ENCODE measurements at regions of chr18 and their contacts with region 1.

Region 1: GRCh38 chr18:59340817-59341216 is 18.2 kb downstream of the LMAN1 start:
- DNase-seq: no peak
- H3K4me3 Mint-ChIP-seq: no peak overlapping the region
- H3K27ac Mint-ChIP-seq: peak overlapping the region; percentile 25
- H3K4me1 Mint-ChIP-seq: peaks cover 48% of the 10 kb centered on the region
- H3K27me3 Mint-ChIP-seq: no peaks in the 10 kb centered on the region

Region 2: DNA sequence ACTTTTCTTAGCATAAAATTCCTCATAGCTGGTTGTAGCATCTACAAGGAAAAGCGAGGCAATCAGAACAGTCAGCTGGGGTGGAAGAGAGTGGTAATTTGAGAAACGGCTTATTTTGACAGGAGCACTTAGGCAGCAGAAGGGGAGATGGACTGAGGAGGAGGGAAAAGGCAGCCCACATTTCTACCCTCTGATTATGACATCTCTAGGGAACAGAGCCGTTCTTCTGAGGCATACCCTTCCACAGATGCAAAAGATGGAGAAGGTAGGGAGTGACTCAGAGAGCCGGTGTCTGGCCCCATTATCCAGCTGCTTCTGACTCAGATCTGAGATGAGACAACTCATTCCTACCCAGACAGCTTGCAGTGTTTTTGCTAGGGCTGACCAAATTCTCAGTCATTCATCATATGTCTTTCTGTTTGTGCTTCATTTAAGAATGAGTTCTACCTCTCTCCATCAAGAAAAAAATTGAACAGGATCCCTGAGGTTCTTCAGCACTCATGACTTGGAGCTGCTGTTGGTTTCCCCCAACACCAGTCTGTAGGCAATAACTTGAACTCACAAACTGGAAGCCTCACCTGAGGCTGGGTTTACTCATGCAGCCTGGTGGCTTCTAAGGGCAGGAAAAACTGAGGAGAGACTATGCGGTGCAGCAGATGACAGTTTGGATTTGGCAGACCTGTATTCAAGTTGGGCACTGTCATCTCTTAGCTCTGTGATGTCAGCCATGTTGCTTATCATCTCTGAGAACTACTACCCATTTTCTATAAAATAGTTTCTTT is 217.0 kb before region 1 on chr18:
- CTCF ChIA-PET with region 1: no interaction called
- intact Hi-C with region 1: no loop called
- DNase-seq: peak; percentile 51
- H3K4me3 Mint-ChIP-seq: no peak overlapping the region
- H3K27ac Mint-ChIP-seq: peak overlapping the region; percentile 52
- H3K4me1 Mint-ChIP-seq: peaks cover 2% of the 10 kb centered on the region
- H3K27me3 Mint-ChIP-seq: peaks cover 10% of the 10 kb centered on the region

Region 3: GRCh38 chr18:59352250-59352855 is 11.5 kb after region 1 on chr18:
- CTCF ChIA-PET with region 1: interaction called, 7 read pairs
- intact Hi-C with region 1: loop called (anchors 1 kb)
- DNase-seq: no peak
- H3K4me3 Mint-ChIP-seq: no peak overlapping the region
- H3K27ac Mint-ChIP-seq: peak overlapping the region; percentile 9
- H3K4me1 Mint-ChIP-seq: peaks cover 44% of the 10 kb centered on the region
- H3K27me3 Mint-ChIP-seq: no peaks in the 10 kb centered on the region

Region 4: GRCh38 chr18:59396111-59396585 is 55.3 kb after region 1 on chr18:
- CTCF ChIA-PET with region 1: no interaction called
- intact Hi-C with region 1: no loop called
- DNase-seq: no peak
- H3K4me3 Mint-ChIP-seq: no peak overlapping the region
- H3K27ac Mint-ChIP-seq: no peak overlapping the region
- H3K4me1 Mint-ChIP-seq: peaks cover 5% of the 10 kb centered on the region
- H3K27me3 Mint-ChIP-seq: peaks cover 15% of the 10 kb centered on the region

Region 5: GRCh38 chr18:59419386-59419785 is 78.6 kb after region 1 on chr18:
- CTCF ChIA-PET with region 1: no interaction called
- intact Hi-C with region 1: no loop called
- DNase-seq: no peak
- H3K4me3 Mint-ChIP-seq: no peak overlapping the region
- H3K27ac Mint-ChIP-seq: no peak overlapping the region
- H3K4me1 Mint-ChIP-seq: no peaks in the 10 kb centered on the region
- H3K27me3 Mint-ChIP-seq: peaks cover 25% of the 10 kb centered on the region

Measured in activated naive CD4-positive, alpha-beta T cell treated with anti-CD3 and anti-CD28 coated beads for 36 hours (primary cell).